ENCODE measurements at regions of chr7 and their contacts with region 1.

Region 1: GRCh38 chr7:36303202-36304098 is 86.2 kb upstream of the ANLN start:
- DNase-seq: peak; percentile 33

Region 2: GRCh38 chr7:35985126-35985754 is 318.2 kb before region 1 on chr7:
- in situ Hi-C with region 1: loop called (anchors 25 kb)
- DNase-seq: peak; percentile 87

Measured in SK-MEL-5 (cell line).